ENCODE measurements at regions of chr10 and their contacts with region 1.

Region 1: GRCh38 chr10:95987685-95988426 is 55.5 kb upstream of the CCNJ start:
- DNase-seq: peak; percentile 55
- H3K4me3 ChIP-seq: peak overlapping the region; percentile 24
- H3K27ac ChIP-seq: peak overlapping the region; percentile 74
- H3K4me1 ChIP-seq: peaks cover 34% of the 10 kb centered on the region
- CTCF ChIP-seq: no peak

Region 2: GRCh38 chr10:95459446-95460045 is 528.3 kb before region 1 on chr10:
- CTCF ChIA-PET with region 1: no interaction called
- POLR2A ChIA-PET with region 1: no interaction called
- intact Hi-C with region 1: no loop called
- DNase-seq: no peak
- H3K4me3 ChIP-seq: no peak overlapping the region
- H3K27ac ChIP-seq: no peak overlapping the region
- H3K4me1 ChIP-seq: no peaks in the 10 kb centered on the region
- CTCF ChIP-seq: no peak

Region 3: DNA sequence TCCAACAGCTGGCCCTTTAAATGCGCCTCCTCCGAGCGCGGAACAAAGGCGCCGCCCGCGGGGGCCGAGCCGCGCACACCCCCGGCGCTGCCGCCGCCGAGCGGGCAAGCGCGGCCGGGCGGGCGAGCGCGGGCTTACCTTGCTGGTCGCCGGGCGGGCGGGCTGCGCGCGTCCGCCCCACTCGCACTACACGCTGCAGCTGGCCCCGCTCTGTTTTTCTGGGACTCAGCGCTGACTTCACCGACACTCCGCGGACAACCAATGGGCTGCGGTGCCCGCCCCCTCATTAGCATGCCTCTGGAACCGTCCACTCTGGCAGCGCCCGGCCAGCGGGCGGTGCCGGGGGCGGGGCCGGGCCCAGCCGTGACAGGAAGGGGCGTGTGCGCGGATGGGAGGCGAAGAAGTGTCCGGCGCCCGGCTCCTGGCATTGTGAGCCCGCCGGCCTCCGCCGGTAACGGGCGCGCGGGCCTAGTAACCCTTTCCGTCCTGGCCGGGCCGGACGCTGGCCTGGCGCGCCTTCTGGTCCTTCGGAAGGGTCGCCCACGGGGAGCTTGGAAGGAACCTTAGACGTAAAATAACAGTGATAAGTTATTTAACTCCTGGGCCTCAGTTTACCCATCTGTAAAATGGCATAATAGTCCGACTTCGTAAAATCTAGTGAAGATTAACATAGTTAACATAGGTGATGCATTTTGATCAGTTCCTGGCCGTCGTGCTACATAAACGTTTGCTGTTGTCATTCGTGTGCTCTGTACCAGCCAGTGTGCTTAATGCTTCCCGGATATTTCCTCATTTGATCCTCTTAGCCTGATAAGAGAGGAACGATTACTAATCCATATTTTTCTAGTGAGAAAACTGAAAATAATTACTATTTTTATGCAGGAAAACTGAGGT is 426.4 kb before region 1 on chr10 and contains the start of gene SORBS1:
- CTCF ChIA-PET with region 1: no interaction called
- POLR2A ChIA-PET with region 1: no interaction called
- intact Hi-C with region 1: loop called (anchors 5 kb)
- DNase-seq: peak; percentile 91
- H3K4me3 ChIP-seq: peak within 1 kb of the TSS; percentile 86
- H3K27ac ChIP-seq: no peak within 1 kb of the TSS
- H3K4me1 ChIP-seq: no peaks in the 10 kb centered on the region
- CTCF ChIP-seq: no peak
- total RNA-seq, gene SORBS1: 0.10 and 0.57 TPM in 2 replicates

Region 4: GRCh38 chr10:95693668-95694534 is 294.0 kb before region 1 on chr10 and contains the start of gene TCTN3:
- CTCF ChIA-PET with region 1: interaction called, 12 read pairs
- POLR2A ChIA-PET with region 1: no interaction called
- intact Hi-C with region 1: loop called (anchors 1 kb)
- DNase-seq: peak; percentile 100
- H3K4me3 ChIP-seq: peak within 1 kb of the TSS; percentile 83
- H3K27ac ChIP-seq: no peak within 1 kb of the TSS
- H3K4me1 ChIP-seq: peaks cover 22% of the 10 kb centered on the region
- CTCF ChIP-seq: peak; percentile 98
- total RNA-seq, gene TCTN3: 9.6 and 10.4 TPM in 2 replicates

Region 5: DNA sequence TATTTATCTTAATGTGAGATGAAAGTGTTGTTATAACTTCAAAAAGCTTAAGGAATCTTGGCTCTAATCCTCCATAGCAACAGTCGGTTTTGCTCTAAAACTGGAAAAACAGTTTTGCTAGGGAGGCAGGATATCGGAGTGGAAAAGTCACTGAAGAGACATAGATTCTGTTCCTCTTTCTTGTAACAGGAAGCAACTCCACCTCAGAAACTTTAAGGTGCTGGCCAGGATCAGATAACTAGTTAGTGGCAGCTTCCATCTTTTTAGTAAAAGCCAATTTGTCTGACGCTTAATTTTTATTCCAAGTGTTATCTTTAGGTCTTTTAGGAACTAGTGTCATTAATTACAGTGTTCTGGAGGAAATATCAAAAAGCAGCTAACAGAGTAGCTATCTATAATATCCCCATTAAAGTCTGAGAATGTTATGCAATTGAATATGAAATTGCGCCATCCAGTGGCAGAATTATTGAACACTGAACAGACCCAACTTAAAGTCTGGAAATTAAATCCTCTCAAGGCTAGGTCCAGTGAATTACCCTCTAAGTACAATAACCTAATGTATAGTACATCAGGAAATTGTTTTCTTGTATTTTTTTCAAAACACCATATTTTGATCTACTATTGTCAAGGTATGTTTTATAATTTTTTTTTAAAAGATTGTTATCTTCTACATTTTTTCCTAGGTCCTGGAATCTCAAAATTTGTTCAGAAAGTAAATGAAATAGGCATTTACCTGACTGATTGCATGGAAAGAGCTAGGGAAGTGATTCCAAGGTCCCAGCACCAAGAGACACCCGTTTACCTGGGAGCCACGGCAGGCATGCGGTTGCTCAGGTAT is 146.0 kb before region 1 on chr10:
- CTCF ChIA-PET with region 1: interaction called, 4 read pairs
- POLR2A ChIA-PET with region 1: interaction called, 5 read pairs
- intact Hi-C with region 1: loop called (anchors 2 kb)
- DNase-seq: peak; percentile 83
- H3K4me3 ChIP-seq: peak overlapping the region; percentile 13
- H3K27ac ChIP-seq: peak overlapping the region; percentile 13
- H3K4me1 ChIP-seq: peaks cover 45% of the 10 kb centered on the region
- CTCF ChIP-seq: peak; percentile 100

Region 6: DNA sequence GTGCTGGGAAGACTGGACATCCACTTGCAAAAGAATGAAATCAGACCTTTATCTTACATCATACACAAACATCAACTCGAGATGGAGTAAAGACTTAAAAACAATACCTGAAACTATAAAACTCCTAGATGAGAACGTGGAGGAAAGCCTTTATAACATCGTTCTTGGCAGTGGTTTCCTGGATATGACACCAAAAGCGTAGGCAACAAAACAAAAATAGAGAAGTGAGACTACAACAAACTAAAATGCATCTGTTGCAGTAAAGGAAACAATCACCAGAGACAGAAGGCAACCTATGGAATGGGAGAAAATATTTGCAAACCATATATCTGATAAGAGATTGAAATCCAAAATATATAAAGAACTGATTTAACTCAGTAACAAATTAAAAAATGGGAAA is 46.7 kb before region 1 on chr10:
- CTCF ChIA-PET with region 1: no interaction called
- POLR2A ChIA-PET with region 1: no interaction called
- intact Hi-C with region 1: no loop called
- DNase-seq: no peak
- H3K4me3 ChIP-seq: no peak overlapping the region
- H3K27ac ChIP-seq: no peak overlapping the region
- H3K4me1 ChIP-seq: no peaks in the 10 kb centered on the region
- CTCF ChIP-seq: no peak

Region 7: GRCh38 chr10:96991313-96991841 is 1003.5 kb after region 1 on chr10:
- CTCF ChIA-PET with region 1: no interaction called
- POLR2A ChIA-PET with region 1: no interaction called
- intact Hi-C with region 1: no loop called
- DNase-seq: no peak
- H3K4me3 ChIP-seq: no peak overlapping the region
- H3K27ac ChIP-seq: no peak overlapping the region
- H3K4me1 ChIP-seq: peaks cover 8% of the 10 kb centered on the region
- CTCF ChIP-seq: no peak